MCF 10A (cell line): ENCODE measurements at regions of chr19 and their contacts with region 1.

Region 1: DNA sequence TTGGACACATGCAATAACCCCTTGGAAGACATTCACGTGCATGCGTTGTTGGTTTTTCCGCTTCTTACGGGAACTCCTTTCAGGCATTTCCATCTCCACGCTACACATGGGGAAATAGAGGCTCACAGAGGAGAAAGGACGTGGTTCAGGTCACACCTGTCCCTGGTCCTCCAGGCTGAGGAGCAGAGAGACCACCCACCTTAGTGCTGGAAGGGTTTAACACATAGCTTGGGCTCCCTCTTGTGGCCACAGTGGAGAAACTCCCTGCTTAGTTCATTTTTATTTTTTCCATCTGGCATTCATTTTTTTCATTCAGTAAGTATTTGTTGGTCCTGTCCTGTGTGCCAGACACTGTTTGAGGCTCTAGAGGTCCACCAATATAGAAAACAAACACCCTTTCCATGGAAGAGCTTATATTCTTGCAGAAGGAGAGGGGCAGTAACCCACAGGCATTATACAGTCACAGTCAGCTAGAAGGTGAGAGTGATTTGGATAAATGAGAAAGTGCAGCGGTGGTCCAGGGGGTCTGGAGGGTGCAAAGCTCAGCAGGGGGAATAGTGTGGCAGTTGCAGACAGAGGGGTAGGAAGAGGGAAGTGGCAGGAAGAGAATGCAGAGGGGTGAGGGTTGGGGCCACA is 24.2 kb upstream of the TTYH1 start:
- DNase-seq: peak; percentile 69
- H3K4me3 Mint-ChIP-seq: no peak overlapping the region
- H3K27ac Mint-ChIP-seq: no peak overlapping the region
- H3K4me1 Mint-ChIP-seq: peaks cover 6% of the 10 kb centered on the region
- H3K27me3 Mint-ChIP-seq: peaks cover 40% of the 10 kb centered on the region
- CTCF ChIP-seq: peak; percentile 76

Region 2: GRCh38 chr19:53927739-53928138 is 463.3 kb before region 1 on chr19:
- CTCF ChIA-PET with region 1: no interaction called
- POLR2A ChIA-PET with region 1: no interaction called
- intact Hi-C with region 1: no loop called
- DNase-seq: peak; percentile 63
- H3K4me3 Mint-ChIP-seq: no peak overlapping the region
- H3K27ac Mint-ChIP-seq: no peak overlapping the region
- H3K4me1 Mint-ChIP-seq: no peaks in the 10 kb centered on the region
- H3K27me3 Mint-ChIP-seq: no peaks in the 10 kb centered on the region
- CTCF ChIP-seq: no peak

Region 3: DNA sequence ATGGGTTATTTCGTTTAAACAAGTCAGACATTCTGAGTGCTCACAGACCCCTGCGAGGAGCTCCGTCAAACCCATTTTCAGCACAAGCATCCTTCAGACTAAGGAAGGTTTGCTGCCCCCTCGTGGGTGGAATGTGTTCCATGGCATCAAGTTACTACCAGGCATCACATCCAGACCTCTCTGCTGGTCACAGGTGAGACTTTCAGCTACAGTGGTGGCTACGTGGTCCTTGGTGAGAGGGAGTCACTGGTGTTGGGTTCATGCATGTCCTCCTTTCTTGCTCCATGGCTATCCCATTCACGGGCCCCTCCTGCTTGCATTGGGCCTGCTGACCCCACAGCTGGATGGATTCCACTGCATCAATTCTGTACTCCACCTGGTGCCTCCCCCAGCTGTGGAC is 124.9 kb before region 1 on chr19:
- CTCF ChIA-PET with region 1: interaction called, 21 read pairs
- POLR2A ChIA-PET with region 1: no interaction called
- intact Hi-C with region 1: no loop called
- DNase-seq: peak; percentile 82
- H3K4me3 Mint-ChIP-seq: no peak overlapping the region
- H3K27ac Mint-ChIP-seq: no peak overlapping the region
- H3K4me1 Mint-ChIP-seq: no peaks in the 10 kb centered on the region
- H3K27me3 Mint-ChIP-seq: peaks cover 56% of the 10 kb centered on the region
- CTCF ChIP-seq: peak; percentile 58

Region 4: DNA sequence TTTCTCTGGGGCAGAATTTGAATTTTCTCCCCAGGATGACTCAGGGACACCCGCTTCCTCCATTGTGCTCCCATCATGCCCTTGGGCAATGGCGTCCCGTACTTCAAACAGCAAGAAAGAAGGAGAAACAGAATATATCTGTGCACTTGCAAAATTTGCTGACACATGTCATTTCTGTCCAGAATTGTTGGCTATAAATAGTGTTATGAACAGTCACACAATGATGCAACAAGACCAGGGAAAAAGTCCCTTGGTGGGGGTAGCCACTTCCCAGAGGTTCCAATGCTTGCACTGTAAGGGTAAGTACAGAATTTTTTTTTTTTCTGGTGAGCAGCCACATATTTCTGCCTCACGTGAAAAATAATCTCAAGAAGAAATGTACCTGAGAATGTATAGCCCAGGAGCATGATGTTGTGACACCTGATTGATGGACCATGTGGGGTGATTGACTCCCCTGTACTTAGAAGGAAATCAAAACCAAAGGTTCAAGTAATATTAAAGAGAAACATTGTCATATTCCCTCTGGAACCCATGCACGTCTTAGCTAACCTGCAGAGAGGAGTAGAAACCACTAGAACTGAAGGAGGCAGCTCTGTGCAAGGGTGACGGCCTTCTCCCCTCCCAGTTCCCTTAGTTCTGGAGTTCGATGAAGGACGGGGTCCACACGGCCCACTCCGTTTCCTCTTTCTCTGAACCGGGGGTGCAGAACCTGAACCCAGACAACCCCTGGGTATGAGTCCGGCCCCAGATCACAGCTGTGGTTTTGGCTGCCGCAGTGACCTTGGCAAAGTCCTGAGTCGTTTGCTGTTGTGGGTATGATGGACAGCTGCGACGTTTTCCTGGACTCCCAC is 17.1 kb before region 1 on chr19:
- CTCF ChIA-PET with region 1: interaction called, 22 read pairs
- POLR2A ChIA-PET with region 1: no interaction called
- intact Hi-C with region 1: no loop called
- DNase-seq: peak; percentile 9
- H3K4me3 Mint-ChIP-seq: no peak overlapping the region
- H3K27ac Mint-ChIP-seq: no peak overlapping the region
- H3K4me1 Mint-ChIP-seq: no peaks in the 10 kb centered on the region
- H3K27me3 Mint-ChIP-seq: no peaks in the 10 kb centered on the region
- CTCF ChIP-seq: no peak

Region 5: GRCh38 chr19:54407780-54408179 is 16.7 kb after region 1 on chr19:
- CTCF ChIA-PET with region 1: interaction called, 11 read pairs
- POLR2A ChIA-PET with region 1: no interaction called
- intact Hi-C with region 1: no loop called
- DNase-seq: no peak
- H3K4me3 Mint-ChIP-seq: no peak overlapping the region
- H3K27ac Mint-ChIP-seq: no peak overlapping the region
- H3K4me1 Mint-ChIP-seq: no peaks in the 10 kb centered on the region
- H3K27me3 Mint-ChIP-seq: no peaks in the 10 kb centered on the region
- CTCF ChIP-seq: no peak

Region 6: DNA sequence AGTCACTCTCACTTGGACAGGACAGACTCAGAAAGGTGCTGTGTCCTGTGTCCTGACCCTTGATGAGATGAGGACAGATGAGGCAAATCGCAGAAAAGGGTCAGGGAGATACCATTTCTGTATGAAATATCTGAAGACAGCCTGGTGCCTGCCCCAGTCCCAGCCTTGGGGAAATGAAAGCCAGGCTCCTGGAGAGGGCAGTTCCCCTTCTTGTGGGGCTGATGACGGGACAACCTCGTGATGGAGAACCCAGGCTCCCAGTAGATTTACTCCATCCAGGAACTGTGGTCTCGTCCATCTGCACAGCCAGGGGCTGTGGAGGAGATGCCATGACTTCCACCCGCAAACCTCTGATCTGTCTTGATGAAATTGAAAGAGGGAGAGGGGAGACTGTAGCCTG is 253.0 kb after region 1 on chr19:
- CTCF ChIA-PET with region 1: no interaction called
- POLR2A ChIA-PET with region 1: no interaction called
- intact Hi-C with region 1: no loop called
- DNase-seq: no peak
- H3K4me3 Mint-ChIP-seq: no peak overlapping the region
- H3K27ac Mint-ChIP-seq: no peak overlapping the region
- H3K4me1 Mint-ChIP-seq: no peaks in the 10 kb centered on the region
- H3K27me3 Mint-ChIP-seq: no peaks in the 10 kb centered on the region
- CTCF ChIP-seq: no peak

Region 7: DNA sequence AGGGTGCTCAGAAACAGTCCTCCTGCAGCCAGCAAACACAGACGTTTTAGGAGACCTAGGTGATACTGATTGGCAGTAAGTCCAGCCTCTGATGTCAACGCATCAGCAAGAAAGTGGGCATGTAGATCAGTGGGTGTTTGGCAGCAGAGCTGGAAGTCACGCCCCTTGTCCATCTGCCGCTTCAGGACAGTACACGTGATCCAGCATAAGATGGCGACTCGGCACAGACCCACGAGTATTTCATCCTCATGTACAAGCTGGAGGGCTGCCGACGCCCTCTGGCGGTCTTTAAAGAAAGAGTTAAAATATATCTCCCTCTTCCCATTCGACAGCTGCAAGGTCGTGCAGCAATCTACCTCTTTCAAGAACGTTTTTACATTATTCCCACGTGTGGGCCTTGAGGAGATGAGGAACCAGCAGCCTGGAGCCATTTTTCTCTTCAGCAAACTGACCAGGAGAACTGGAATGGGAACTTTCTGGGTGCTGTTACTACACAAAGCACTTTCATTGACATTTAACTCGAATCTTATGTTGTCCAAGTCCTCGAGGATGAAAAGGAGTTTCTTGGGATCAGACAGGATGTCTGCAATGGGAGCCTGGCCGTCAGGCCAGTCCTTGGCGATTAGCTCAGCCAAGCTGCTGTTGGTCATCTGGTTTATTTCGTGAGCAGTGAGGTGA is 1418.5 kb after region 1 on chr19:
- CTCF ChIA-PET with region 1: no interaction called
- POLR2A ChIA-PET with region 1: no interaction called
- intact Hi-C with region 1: no loop called
- DNase-seq: peak; percentile 83
- H3K4me3 Mint-ChIP-seq: no peak overlapping the region
- H3K27ac Mint-ChIP-seq: no peak overlapping the region
- H3K4me1 Mint-ChIP-seq: no peaks in the 10 kb centered on the region
- H3K27me3 Mint-ChIP-seq: no peaks in the 10 kb centered on the region
- CTCF ChIP-seq: peak; percentile 23